Prostate gland (tissue), 2 donors: ENCODE measurements at regions of chr6 and their contacts with region 1.

Region 1: GRCh38 chr6:108526739-108527174 is 34.0 kb upstream of the FOXO3 start:
- DNase-seq: no peak
- H3K4me3 ChIP-seq: no peak overlapping the region
- H3K27ac ChIP-seq: no peak overlapping the region
- H3K4me1 ChIP-seq: no peaks in the 10 kb centered on the region
- H3K27me3 ChIP-seq: no peaks in the 10 kb centered on the region
- CTCF ChIP-seq: peak; percentile 57 to 69 (median 64)
- POLR2A ChIP-seq: no peak

Region 2: DNA sequence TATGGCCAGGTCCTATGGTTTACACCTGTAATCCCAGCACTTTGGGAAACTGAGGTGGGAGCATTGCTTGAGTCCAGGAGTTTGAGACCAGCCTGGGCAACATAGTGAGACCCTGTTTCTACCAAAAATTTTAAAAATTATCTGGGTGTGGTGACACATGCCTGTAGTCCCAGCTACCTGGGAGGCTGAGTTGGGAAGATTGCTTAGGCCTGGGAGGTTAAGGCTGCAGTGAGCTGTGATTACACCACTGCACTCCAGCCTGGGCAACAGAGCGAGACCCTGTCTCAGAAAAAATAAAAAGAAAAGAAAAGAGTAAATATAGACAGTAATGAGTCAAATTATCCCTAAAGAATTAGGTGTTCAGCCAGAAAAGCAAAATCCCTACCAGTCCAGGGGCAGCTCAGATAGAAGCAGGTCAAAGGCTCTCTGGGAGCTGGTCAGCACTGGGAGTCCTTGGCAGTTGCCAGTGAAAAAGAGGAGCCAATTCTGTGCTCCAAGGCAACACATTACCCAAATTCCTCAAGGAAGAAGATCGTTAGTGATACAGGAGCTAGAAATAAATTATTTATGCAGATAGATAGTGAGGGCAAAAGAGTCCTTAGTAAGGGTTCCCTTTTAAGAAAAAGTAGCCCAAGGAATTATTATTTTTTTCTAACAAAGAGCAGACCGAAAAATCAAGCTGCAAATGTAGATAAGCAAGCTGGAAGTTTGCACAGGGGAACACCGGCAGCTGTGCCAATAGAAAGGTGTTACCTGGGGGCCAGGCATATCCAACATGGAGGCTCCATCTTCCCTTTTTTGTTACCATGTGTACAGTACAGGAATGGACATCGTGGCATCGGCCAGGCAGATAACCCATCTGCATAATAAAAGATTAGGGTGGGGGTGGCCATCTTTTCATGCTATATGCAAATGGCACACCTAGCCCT is 537.3 kb before region 1 on chr6:
- intact Hi-C with region 1: loop called (anchors 10 kb)
- DNase-seq: no peak
- H3K4me3 ChIP-seq: no peak overlapping the region
- H3K27ac ChIP-seq: no peak overlapping the region
- H3K4me1 ChIP-seq: no peaks in the 10 kb centered on the region
- H3K27me3 ChIP-seq: no peaks in the 10 kb centered on the region
- CTCF ChIP-seq: no peak
- POLR2A ChIP-seq: no peak

Region 3: GRCh38 chr6:108113557-108114519 is 412.9 kb before region 1 on chr6:
- intact Hi-C with region 1: loop called (anchors 5 kb)
- DNase-seq: no peak
- H3K4me3 ChIP-seq: no peak overlapping the region
- H3K27ac ChIP-seq: no peak overlapping the region
- H3K4me1 ChIP-seq: peaks cover 2% of the 10 kb centered on the region
- H3K27me3 ChIP-seq: peaks cover 12% of the 10 kb centered on the region
- CTCF ChIP-seq: peak; percentile 25 to 68 (median 64)
- POLR2A ChIP-seq: no peak